PC-3 (cell line): ENCODE measurements at regions of chrX and their contacts with region 1.

Region 1: DNA sequence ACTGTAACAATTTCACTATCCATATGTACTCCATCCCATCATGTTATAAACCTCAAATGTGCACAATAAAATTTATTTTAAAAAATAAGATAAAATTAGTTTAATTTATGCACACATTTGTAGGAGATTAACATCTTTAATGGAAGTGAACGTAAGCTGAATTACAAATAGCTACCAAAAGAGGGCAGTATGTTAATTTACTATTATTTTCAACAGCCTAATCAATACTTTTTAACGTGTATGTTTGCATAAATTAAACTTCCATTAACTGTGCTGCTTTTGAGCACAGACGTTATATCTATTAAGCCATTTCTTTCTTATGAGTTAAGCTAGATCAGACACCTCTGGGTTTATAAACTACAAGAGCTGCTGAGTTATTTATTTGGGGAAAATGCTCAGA is 56.5 kb upstream of the PHKA2 start:
- DNase-seq: peak; percentile 40
- ATAC-seq: no peak
- H3K4me3 ChIP-seq: no peak overlapping the region
- H3K27ac ChIP-seq: no peak overlapping the region
- H3K4me1 ChIP-seq: no peaks in the 10 kb centered on the region
- H3K27me3 ChIP-seq: no peaks in the 10 kb centered on the region
- CTCF ChIP-seq: peak; percentile 61

Region 2: GRCh38 chrX:19121898-19122640 is 81.7 kb after region 1 on chrX and contains the start of gene ADGRG2:
- CTCF ChIA-PET with region 1: interaction called, 3 read pairs
- POLR2A ChIA-PET with region 1: no interaction called
- intact Hi-C with region 1: loop called (anchors 5 kb)
- DNase-seq: peak; percentile 48
- ATAC-seq: peak; percentile 86
- H3K4me3 ChIP-seq: peak within 1 kb of the TSS; percentile 67
- H3K27ac ChIP-seq: no peak within 1 kb of the TSS
- H3K4me1 ChIP-seq: no peaks in the 10 kb centered on the region
- H3K27me3 ChIP-seq: peaks cover 20% of the 10 kb centered on the region
- CTCF ChIP-seq: 0 out of 2 replicates have a peak, but pooled peaks have one; percentile 25
- total RNA-seq, gene ADGRG2: 1.1 and 1.4 TPM in 2 replicates

Region 3: DNA sequence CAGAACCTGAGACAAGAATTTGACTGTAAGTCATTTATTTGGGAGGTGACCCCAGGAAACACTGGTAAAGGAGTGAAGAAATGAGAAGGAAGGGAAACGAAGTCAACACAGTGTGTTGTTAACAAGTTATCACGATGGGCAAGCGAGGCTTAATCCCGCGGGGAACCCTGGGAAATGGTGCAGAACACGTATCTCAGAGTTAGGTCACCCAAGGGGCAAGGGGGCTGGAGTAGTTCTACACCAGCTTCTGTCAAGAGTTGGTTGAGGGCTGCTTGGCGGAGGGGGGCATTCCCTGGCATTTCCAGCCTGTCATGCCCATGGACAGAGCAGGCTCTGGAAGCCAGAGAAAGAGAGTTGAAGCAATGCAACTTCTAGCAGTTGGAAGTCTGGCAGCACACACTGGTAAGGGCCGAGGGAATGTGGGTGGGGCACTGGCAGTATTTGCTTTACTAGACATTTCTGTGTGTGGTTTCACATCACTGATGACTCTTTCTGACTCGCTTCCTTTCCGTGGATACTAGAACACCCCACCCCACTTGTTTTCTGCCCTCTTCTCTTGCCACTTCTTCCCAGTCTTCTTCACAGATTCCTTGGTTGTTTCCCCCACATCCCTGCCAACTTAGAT is 134.1 kb after region 1 on chrX:
- CTCF ChIA-PET with region 1: no interaction called
- POLR2A ChIA-PET with region 1: no interaction called
- intact Hi-C with region 1: loop called (anchors 10 kb)
- DNase-seq: peak; percentile 91
- ATAC-seq: peak; percentile 98
- H3K4me3 ChIP-seq: no peak overlapping the region
- H3K27ac ChIP-seq: peak overlapping the region; percentile 86
- H3K4me1 ChIP-seq: peaks cover 29% of the 10 kb centered on the region
- H3K27me3 ChIP-seq: no peaks in the 10 kb centered on the region
- CTCF ChIP-seq: no peak

Region 4: GRCh38 chrX:19225924-19226323 is 185.6 kb after region 1 on chrX:
- CTCF ChIA-PET with region 1: interaction called, 5 read pairs
- POLR2A ChIA-PET with region 1: no interaction called
- intact Hi-C with region 1: loop called (anchors 5 kb)
- DNase-seq: peak; percentile 61
- ATAC-seq: peak; percentile 55
- H3K4me3 ChIP-seq: no peak overlapping the region
- H3K27ac ChIP-seq: no peak overlapping the region
- H3K4me1 ChIP-seq: peaks cover 4% of the 10 kb centered on the region; the same call in 1 of the 2 replicates
- H3K27me3 ChIP-seq: no peaks in the 10 kb centered on the region
- CTCF ChIP-seq: peak; percentile 56